ENCODE measurements at regions of chr3 and their contacts with region 1.

Region 1: GRCh38 chr3:120417272-120417911 is 33.4 kb downstream of the FSTL1 start:
- DNase-seq: peak; percentile 95
- H3K4me3 Mint-ChIP-seq: peak overlapping the region; percentile 90
- H3K27ac Mint-ChIP-seq: peak overlapping the region; percentile 46
- H3K4me1 Mint-ChIP-seq: peaks cover 14% of the 10 kb centered on the region
- H3K27me3 Mint-ChIP-seq: peaks cover 5% of the 10 kb centered on the region

Region 2: GRCh38 chr3:119819806-119820205 is 597.6 kb before region 1 on chr3:
- intact Hi-C with region 1: loop called (anchors 1 kb)
- DNase-seq: no peak
- H3K4me3 Mint-ChIP-seq: no peak overlapping the region
- H3K27ac Mint-ChIP-seq: no peak overlapping the region
- H3K4me1 Mint-ChIP-seq: no peaks in the 10 kb centered on the region
- H3K27me3 Mint-ChIP-seq: no peaks in the 10 kb centered on the region

Region 3: GRCh38 chr3:120245386-120245785 is 172.0 kb before region 1 on chr3:
- intact Hi-C with region 1: loop called (anchors 1 kb)
- DNase-seq: no peak
- H3K4me3 Mint-ChIP-seq: no peak overlapping the region
- H3K27ac Mint-ChIP-seq: no peak overlapping the region
- H3K4me1 Mint-ChIP-seq: no peaks in the 10 kb centered on the region
- H3K27me3 Mint-ChIP-seq: peaks cover 26% of the 10 kb centered on the region

Region 4: DNA sequence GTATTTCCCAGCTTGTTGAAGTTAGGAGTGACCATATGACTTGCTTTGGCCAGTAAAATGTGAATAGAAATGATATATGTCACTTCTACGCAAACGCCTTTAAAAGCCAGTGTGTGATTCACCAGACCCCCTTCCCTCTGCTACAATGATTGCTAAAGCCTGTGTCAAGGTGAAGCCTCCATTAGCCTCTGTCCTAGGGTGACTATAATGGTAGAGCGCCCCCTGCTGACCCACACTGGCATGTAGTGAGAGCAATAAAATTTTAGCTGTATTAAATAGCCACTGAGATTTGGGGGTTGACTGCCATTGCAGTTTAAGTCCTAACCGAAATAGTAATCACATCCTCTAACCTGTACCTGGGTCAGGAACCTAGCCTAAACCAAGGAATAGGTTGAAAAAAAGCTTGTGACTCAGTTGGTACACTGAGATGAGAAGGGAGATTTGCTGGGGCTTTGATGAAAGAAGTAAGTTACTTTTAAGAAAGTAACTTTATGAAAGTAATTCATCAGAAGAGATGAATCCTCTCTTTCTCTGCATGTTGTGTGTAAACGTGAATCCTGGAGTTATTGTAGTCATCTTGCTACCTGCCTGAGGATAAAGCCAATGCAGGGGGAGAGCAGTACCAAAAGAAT is 377.7 kb after region 1 on chr3:
- intact Hi-C with region 1: loop called (anchors 10 kb)
- DNase-seq: peak; percentile 95
- H3K4me3 Mint-ChIP-seq: no peak overlapping the region
- H3K27ac Mint-ChIP-seq: no peak overlapping the region
- H3K4me1 Mint-ChIP-seq: no peaks in the 10 kb centered on the region
- H3K27me3 Mint-ChIP-seq: peaks cover 3% of the 10 kb centered on the region

Measured in activated CD4-positive, alpha-beta T cell treated with anti-CD3 and anti-CD28 coated beads, Interleukin-2, amount 10 ng/mL, durations not matched to agents 24 days and 14 days (primary cell).